ENCODE measurements at regions of chr10 and their contacts with region 1.

Region 1: GRCh38 chr10:14478604-14479003 is 147.9 kb upstream of the FRMD4A start:
- DNase-seq: peak; percentile 19
- H3K4me3 ChIP-seq: no peak overlapping the region
- H3K27me3 ChIP-seq: peaks cover 2% of the 10 kb centered on the region
- CTCF ChIP-seq: peak; percentile 72

Region 2: DNA sequence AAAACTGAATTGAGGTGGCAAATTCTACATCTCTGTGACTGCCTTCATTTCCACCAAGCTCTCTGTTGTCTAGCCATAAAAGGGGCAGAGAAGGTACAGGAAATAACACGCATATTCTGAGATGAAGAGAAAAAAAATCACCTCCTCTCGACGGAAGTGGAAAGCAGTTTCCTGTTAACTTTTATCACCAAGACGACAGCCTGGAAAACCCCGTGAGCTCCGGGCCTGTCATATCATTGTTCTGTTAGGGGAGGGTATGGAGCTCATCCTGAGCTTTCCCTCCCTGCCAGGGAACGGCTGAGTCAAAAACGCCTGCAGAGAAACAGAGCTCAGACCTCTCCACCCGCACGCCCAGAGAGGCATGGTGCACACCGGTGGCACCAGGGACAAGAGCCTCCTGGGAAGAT is 691.6 kb before region 1 on chr10:
- CTCF ChIA-PET with region 1: interaction called, 11 read pairs
- POLR2A ChIA-PET with region 1: no interaction called
- DNase-seq: no peak
- H3K4me3 ChIP-seq: no peak overlapping the region
- H3K27me3 ChIP-seq: no peaks in the 10 kb centered on the region
- CTCF ChIP-seq: no peak

Region 3: GRCh38 chr10:14146025-14146424 is 332.6 kb before region 1 on chr10:
- CTCF ChIA-PET with region 1: no interaction called
- POLR2A ChIA-PET with region 1: no interaction called
- DNase-seq: peak; percentile 54
- H3K4me3 ChIP-seq: no peak overlapping the region
- H3K27me3 ChIP-seq: peaks cover 2% of the 10 kb centered on the region
- CTCF ChIP-seq: no peak

Region 4: GRCh38 chr10:14195433-14195832 is 283.2 kb before region 1 on chr10:
- CTCF ChIA-PET with region 1: interaction called, 112 read pairs
- POLR2A ChIA-PET with region 1: interaction called, 6 read pairs
- DNase-seq: no peak
- H3K4me3 ChIP-seq: no peak overlapping the region
- H3K27me3 ChIP-seq: peaks cover 15% of the 10 kb centered on the region
- CTCF ChIP-seq: no peak

Region 5: GRCh38 chr10:14244147-14244546 is 234.5 kb before region 1 on chr10:
- CTCF ChIA-PET with region 1: no interaction called
- POLR2A ChIA-PET with region 1: no interaction called
- DNase-seq: no peak
- H3K4me3 ChIP-seq: no peak overlapping the region
- H3K27me3 ChIP-seq: peaks cover 3% of the 10 kb centered on the region; the same call in 1 of the 2 replicates
- CTCF ChIP-seq: no peak

Region 6: GRCh38 chr10:14302035-14302434 is 176.6 kb before region 1 on chr10:
- CTCF ChIA-PET with region 1: interaction called, 10 read pairs
- POLR2A ChIA-PET with region 1: no interaction called
- DNase-seq: no peak
- H3K4me3 ChIP-seq: no peak overlapping the region
- H3K27me3 ChIP-seq: peaks cover 6% of the 10 kb centered on the region
- CTCF ChIP-seq: peak; percentile 62

Region 7: DNA sequence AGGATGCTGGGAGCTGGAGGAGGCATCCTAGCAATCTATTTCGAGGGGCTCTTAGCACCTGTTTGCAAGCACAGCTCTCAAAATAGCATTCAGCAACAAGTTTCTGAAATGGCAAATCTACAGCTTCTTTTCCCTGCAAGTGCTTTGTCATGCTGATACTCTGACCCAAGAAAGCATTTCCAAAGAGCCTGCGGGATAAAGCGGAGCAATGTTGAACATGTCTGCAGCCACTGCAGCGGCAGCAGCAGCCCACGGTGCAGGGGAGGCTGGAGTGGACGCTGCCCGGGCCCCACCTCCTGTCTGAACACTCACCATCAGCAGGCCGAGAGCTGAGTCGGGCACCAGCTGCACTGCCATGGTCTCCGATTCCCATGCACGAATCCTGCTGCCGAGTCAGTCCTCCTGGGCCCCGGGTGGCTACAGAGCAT is 148.8 kb before region 1 on chr10:
- CTCF ChIA-PET with region 1: no interaction called
- POLR2A ChIA-PET with region 1: no interaction called
- DNase-seq: no peak
- H3K4me3 ChIP-seq: no peak overlapping the region
- H3K27me3 ChIP-seq: peaks cover 20% of the 10 kb centered on the region
- CTCF ChIP-seq: no peak

Region 8: GRCh38 chr10:14453593-14453992 is 25.0 kb before region 1 on chr10:
- CTCF ChIA-PET with region 1: interaction called, 3 read pairs
- POLR2A ChIA-PET with region 1: interaction called, 14 read pairs
- DNase-seq: no peak
- H3K4me3 ChIP-seq: no peak overlapping the region
- H3K27me3 ChIP-seq: peaks cover 3% of the 10 kb centered on the region
- CTCF ChIP-seq: no peak